Activated CD4-positive, alpha-beta T cell treated with anti-CD3 and anti-CD28 coated beads for 36 hours (primary cell): ENCODE measurements at regions of chr19 and their contacts with region 1.

Region 1: GRCh38 chr19:40640744-40641143 is 39.6 kb downstream of the LTBP4 start:
- DNase-seq: no peak
- ATAC-seq: no peak
- H3K4me3 Mint-ChIP-seq: no peak overlapping the region
- H3K27ac Mint-ChIP-seq: no peak overlapping the region
- H3K4me1 Mint-ChIP-seq: peaks cover 5% of the 10 kb centered on the region
- H3K27me3 Mint-ChIP-seq: peaks cover 1% of the 10 kb centered on the region

Region 2: GRCh38 chr19:40542202-40542859 is 98.4 kb before region 1 on chr19:
- CTCF ChIA-PET with region 1: interaction called, 17 read pairs
- POLR2A ChIA-PET with region 1: no interaction called
- intact Hi-C with region 1: loop called in 1 of 2 experiments (anchors 2 kb)
- DNase-seq: no peak
- ATAC-seq: no peak
- H3K4me3 Mint-ChIP-seq: no peak overlapping the region
- H3K27ac Mint-ChIP-seq: no peak overlapping the region
- H3K4me1 Mint-ChIP-seq: no peaks in the 10 kb centered on the region
- H3K27me3 Mint-ChIP-seq: peaks cover 6% of the 10 kb centered on the region

Region 3: DNA sequence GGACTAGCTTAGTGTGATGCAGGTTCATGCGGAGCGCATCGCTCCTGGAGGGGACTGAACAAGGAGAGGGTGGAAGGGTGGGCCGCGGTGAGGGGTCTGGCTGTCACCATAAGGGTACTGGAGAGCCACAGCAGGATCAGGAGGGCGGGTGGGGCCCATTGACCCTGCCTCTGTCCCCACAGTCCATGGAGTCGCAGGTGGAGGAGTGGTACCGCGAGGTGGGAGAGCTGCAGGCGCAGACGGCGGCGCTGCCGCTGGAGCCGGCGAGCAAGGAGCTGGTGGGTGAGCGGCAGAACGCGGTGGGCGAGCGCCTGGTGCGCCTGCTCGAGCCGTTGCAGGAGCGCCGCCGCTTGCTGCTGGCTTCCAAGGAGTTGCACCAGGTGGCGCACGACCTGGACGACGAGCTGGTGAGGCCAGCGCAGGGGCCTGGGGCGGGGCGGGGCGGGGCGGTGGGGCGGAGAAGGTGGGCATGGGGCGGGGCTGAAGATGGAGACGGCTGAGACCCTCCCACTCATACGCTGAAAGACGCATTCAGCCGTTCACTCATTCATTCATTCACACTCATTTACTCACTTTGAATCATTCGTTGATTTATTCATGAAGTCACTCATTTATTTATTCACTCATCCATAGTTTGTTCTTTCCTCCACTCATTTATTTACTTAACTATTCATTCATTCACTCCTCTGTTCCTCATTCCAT is 91.6 kb before region 1 on chr19:
- CTCF ChIA-PET with region 1: interaction called, 17 read pairs
- POLR2A ChIA-PET with region 1: no interaction called
- intact Hi-C with region 1: no loop called
- DNase-seq: peak; percentile 90
- ATAC-seq: peak; percentile 95
- H3K4me3 Mint-ChIP-seq: no peak overlapping the region
- H3K27ac Mint-ChIP-seq: no peak overlapping the region
- H3K4me1 Mint-ChIP-seq: peaks cover 10% of the 10 kb centered on the region
- H3K27me3 Mint-ChIP-seq: peaks cover 37% of the 10 kb centered on the region